Posterior vena cava (tissue), 2 donors: ENCODE measurements at regions of chr4 and their contacts with region 1.

Region 1: DNA sequence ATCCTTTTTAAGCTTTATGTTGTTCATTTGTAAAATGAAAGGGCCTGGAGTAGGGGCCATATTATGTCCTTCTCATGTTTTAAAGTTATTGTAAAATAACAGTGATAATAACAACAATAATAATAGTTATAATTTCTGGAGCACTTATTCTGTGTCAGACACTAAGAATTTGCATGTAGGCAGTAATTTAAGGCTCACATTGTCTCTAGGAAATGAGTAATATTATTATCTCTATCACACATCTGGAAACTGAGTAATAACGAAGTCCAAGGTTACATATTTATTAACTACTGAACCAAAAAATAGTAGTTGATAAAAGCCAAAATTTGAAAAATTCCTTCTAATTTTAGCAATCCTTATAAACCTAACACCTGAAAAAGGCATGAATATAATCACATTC is 520.7 kb upstream of the PABPC4L start:
- DNase-seq: no peak

Region 2: DNA sequence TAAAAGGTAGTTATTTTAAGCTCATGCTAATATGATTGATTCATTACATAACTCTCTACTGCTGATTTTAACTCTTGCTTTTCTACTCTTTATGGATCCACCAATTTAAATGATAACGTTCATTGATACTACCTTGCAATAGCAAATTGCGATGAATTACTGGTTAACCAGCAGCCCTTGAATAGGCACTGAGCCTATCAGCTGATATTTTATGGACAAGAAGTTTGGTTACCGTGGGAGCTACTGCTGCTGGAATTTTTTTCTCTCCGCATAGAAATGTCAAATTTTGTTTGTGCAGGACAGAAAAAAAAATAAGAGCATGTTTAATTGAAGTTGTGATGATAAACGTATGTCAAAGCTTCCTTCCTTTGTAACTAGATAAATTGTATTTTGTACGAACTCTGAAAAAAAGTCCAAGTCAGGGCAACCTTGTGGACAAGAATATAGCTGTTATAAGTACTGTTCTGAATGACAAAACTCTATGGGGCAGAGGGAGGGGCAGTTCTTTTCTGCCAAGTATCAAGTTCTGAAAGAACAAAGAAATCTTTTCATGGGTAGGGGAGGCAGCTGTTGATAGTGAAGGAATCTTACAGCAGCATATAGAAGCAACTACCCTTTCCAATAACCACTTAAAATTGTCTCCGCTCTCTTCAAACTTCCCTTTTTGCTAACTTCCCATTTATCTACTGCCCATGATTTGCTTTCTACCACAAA is 85.8 kb before region 1 on chr4:
- intact Hi-C with region 1: no loop called
- DNase-seq: no peak

Region 3: DNA sequence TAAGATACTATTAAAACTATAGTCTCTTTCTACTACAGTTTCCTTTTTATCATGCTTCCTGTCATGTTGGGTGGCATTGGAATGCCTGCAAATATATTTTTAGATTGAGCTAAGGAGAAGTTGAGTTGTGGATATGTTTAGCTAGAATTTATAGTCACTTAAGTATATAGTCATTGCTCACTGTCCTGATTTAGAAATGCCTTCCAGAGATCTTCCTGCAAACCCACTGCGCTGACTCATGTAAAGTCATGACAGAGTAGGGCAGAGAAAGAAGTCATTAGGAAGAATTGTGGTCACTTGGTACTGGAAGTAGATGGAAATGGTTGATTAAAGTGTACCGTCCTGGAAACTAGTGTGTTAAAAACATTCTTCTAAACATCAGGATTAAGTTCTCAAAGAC is 30.4 kb before region 1 on chr4:
- intact Hi-C with region 1: loop called in 1 of 2 experiments (anchors 1 kb)
- DNase-seq: no peak